OCI-LY7 (cell line): ENCODE measurements at regions of chr13 and their contacts with region 1.

Region 1: DNA sequence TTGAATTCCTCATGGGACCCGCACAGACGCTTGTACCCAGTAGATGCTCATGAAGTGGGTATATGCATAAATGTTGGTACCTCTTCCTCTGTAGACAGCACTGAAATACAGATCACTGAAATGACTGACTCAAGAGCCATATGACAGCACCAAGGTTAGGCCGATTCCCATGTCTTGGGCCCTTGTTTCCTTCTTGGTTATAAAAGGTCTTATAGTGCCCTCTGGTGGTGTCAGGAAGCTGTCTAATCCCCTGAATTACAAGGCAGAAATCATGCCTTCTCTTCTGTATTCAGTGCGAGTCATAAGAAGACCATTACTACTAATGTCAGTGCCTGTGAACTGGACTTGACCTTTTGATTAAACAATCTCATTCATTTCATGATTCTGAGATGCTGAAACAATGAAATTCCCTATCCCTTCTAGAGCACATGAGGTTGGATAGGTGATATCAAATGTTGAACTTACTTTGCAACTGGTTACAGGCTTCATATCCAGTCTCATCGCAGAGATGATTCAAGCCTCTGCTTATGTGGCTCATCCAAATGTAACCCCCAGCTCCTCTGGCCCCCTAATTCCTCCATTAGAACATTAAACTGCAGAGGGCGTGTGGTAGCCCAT is 59.7 kb downstream of the SPATA13 start:
- DNase-seq: peak; percentile 81
- H3K4me3 ChIP-seq: no peak overlapping the region
- H3K27ac ChIP-seq: no peak overlapping the region
- H3K4me1 ChIP-seq: peaks cover 31% of the 10 kb centered on the region
- CTCF ChIP-seq: peak; percentile 91

Region 2: DNA sequence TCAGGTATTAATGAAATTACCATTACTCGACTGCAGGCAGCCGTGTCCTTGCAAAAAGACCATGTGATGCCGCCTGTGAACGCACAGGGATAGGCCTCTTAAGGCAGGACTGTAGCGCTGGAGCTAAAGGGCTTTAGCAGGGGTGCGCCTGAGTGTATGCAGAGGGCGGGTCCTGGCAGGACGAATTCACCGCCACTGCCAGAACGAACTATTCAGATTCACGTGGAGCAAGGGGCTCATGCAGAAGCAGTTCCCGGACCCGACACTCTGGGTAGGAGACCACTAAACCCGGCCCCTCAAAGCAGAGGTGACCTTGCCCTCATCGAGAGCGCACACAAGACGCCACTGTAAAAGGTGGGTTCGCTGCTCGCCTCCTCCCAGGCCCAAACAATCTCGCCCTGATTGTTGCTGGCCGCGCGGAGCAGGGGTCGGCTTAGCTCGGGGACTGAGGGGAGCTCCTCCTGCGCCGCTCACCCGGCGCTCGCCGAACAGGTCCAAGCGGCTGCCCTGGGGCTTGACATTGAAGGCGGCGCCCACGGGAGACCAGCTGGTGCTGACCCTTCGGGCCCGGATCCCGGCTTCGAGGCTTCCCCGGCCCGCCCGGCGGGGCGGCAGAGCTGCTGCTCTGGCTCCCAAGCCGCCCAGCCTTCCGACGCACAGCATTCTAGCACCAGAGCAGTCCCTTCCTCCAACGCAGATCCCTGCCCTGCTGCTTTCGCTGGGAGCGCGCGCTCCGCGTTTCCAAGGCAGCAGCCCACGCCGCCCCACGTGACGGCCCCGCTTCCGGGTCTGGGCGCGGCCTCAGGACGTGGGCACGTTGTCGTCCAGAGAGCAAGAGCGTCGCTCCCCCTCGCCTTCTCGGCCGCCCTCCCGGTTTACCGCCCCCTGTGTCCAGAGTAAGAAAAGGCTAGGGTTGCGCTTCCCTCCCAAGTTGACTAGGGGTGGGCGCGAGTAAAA is 331.3 kb before region 1 on chr13 and contains the start of gene MIPEP:
- CTCF ChIA-PET with region 1: interaction called, 3 read pairs
- POLR2A ChIA-PET with region 1: no interaction called
- intact Hi-C with region 1: loop called (anchors 10 kb)
- DNase-seq: peak; percentile 95
- H3K4me3 ChIP-seq: peak within 1 kb of the TSS; percentile 92
- H3K27ac ChIP-seq: peak within 1 kb of the TSS; percentile 38
- H3K4me1 ChIP-seq: peaks cover 14% of the 10 kb centered on the region
- CTCF ChIP-seq: peak; percentile 80
- total RNA-seq, gene MIPEP: 13.5 and 15.5 TPM in 2 replicates

Region 3: GRCh38 chr13:23960566-23961156 is 259.5 kb before region 1 on chr13:
- CTCF ChIA-PET with region 1: no interaction called
- POLR2A ChIA-PET with region 1: no interaction called
- intact Hi-C with region 1: no loop called
- DNase-seq: peak; percentile 27
- H3K4me3 ChIP-seq: no peak overlapping the region
- H3K27ac ChIP-seq: no peak overlapping the region
- H3K4me1 ChIP-seq: no peaks in the 10 kb centered on the region
- CTCF ChIP-seq: peak; percentile 83

Region 4: DNA sequence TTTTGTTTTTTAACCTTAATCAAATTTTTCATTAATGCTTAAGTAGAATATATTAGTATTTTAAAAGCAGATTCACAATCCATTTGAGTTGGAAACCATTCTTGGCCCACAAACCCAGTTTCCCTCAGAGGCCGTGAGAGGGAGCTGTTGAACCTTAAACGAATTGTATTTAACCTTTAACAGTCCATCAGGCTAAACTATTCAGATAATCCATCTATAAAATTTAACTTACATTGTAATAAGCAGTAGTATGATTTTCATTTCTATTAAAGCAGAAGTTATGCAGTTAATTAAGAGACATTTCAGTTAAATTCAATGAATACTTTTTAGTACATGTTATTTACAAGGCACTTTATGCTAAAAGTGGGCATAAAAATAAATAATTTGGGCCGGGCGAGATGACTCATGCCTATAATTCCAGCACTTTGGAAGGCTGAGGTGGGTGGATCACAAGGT is 199.8 kb before region 1 on chr13:
- CTCF ChIA-PET with region 1: interaction called, 3 read pairs
- POLR2A ChIA-PET with region 1: interaction called, 6 read pairs
- intact Hi-C with region 1: loop called (anchors 1 kb)
- DNase-seq: peak; percentile 57
- H3K4me3 ChIP-seq: no peak overlapping the region
- H3K27ac ChIP-seq: no peak overlapping the region
- H3K4me1 ChIP-seq: no peaks in the 10 kb centered on the region
- CTCF ChIP-seq: peak; percentile 90

Region 5: GRCh38 chr13:24160454-24161009 is 59.7 kb before region 1 on chr13 and contains the start of gene SPATA13:
- CTCF ChIA-PET with region 1: interaction called, 14 read pairs
- POLR2A ChIA-PET with region 1: interaction called, 24 read pairs
- intact Hi-C with region 1: loop called (anchors 1 kb)
- DNase-seq: peak; percentile 89
- H3K4me3 ChIP-seq: peak within 1 kb of the TSS; percentile 73
- H3K27ac ChIP-seq: no peak within 1 kb of the TSS
- H3K4me1 ChIP-seq: peaks cover 11% of the 10 kb centered on the region
- CTCF ChIP-seq: no peak
- total RNA-seq, gene SPATA13: 3.8 and 6.6 TPM in 2 replicates

Region 6: DNA sequence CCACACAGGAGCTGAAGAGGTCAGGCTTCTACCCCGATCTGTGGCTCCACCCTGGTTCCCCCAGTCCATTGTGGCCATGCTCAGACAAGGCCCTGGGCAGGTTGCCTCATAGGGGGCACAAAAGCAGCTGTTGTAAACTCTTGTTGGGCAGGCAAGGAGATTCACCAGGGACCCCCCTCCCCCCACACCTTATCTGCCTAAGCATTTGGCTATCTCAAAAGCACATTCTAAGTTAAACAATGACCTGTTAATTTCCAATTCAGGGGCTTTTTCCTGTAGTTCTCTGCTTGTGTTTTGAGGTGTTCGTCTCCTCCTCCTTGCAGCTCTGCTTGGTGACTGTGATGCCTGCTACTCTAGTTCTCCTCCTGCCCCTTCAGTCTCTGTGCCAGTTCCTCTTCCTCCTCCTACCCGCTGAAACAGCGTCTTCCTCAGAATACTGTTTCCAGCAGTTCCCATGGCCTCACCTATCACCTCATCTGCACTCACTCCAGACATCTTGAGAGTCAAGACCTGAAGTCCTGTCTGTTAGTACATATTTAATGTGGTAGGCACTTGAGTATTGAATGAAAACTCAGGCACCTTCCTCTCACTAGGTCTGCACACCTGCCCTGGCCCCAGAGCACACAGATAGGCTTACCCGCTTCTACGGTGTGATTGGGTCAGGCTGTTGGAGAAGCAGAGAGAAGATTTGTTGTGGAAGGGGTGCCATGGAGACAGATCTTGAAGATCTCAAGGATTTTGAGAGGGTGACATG is 28.0 kb before region 1 on chr13:
- CTCF ChIA-PET with region 1: no interaction called
- POLR2A ChIA-PET with region 1: interaction called, 11 read pairs
- intact Hi-C with region 1: no loop called
- DNase-seq: no peak
- H3K4me3 ChIP-seq: no peak overlapping the region
- H3K27ac ChIP-seq: no peak overlapping the region
- H3K4me1 ChIP-seq: peaks cover 8% of the 10 kb centered on the region
- CTCF ChIP-seq: no peak